CD8-positive, alpha-beta T cell (primary cell): ENCODE measurements at regions of chr12 and their contacts with region 1.

Region 1: GRCh38 chr12:31274520-31275300 is 51.2 kb downstream of the SINHCAF start:
- DNase-seq: no peak
- ATAC-seq: no peak
- H3K4me3 ChIP-seq: no peak overlapping the region
- H3K4me3 Mint-ChIP-seq: no peak overlapping the region
- H3K27ac ChIP-seq: no peak overlapping the region
- H3K27ac Mint-ChIP-seq: peak overlapping the region; percentile 20
- H3K4me1 ChIP-seq: no peaks in the 10 kb centered on the region
- H3K4me1 Mint-ChIP-seq: peaks cover 3% of the 10 kb centered on the region
- H3K27me3 ChIP-seq: no peaks in the 10 kb centered on the region
- H3K27me3 Mint-ChIP-seq: no peaks in the 10 kb centered on the region
- CTCF ChIP-seq: no peak

Region 2: DNA sequence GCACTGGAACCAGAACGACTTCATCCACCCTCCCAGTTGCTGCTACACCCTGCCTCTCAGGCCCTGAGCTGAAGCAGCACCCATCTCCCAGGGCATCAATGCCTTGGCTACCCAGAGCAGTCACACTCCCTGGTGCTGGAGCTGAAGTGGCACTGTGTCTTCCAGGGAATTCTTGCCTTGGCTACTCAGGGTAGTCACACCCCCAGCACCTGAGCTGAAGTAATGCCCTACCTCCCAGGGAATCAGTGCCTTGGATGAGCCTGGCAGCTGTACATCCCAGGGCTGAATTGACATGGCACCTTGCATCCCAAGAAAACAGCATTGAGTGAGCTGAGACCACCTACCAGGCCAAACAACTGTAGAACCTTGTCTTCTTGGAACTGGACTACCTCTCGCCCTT is 389.4 kb before region 1 on chr12:
- CTCF ChIA-PET with region 1: no interaction called
- POLR2A ChIA-PET with region 1: no interaction called
- intact Hi-C with region 1: no loop called
- DNase-seq: no peak
- ATAC-seq: no peak
- H3K4me3 ChIP-seq: no peak overlapping the region
- H3K4me3 Mint-ChIP-seq: no peak overlapping the region
- H3K27ac ChIP-seq: no peak overlapping the region
- H3K27ac Mint-ChIP-seq: no peak overlapping the region
- H3K4me1 ChIP-seq: no peaks in the 10 kb centered on the region
- H3K4me1 Mint-ChIP-seq: no peaks in the 10 kb centered on the region
- H3K27me3 ChIP-seq: no peaks in the 10 kb centered on the region
- H3K27me3 Mint-ChIP-seq: peaks cover 3% of the 10 kb centered on the region
- CTCF ChIP-seq: no peak

Region 3: GRCh38 chr12:30905463-30906009 is 369.2 kb before region 1 on chr12:
- CTCF ChIA-PET with region 1: no interaction called
- POLR2A ChIA-PET with region 1: no interaction called
- intact Hi-C with region 1: no loop called
- DNase-seq: no peak
- ATAC-seq: no peak
- H3K4me3 ChIP-seq: no peak overlapping the region
- H3K4me3 Mint-ChIP-seq: no peak overlapping the region
- H3K27ac ChIP-seq: no peak overlapping the region
- H3K27ac Mint-ChIP-seq: no peak overlapping the region
- H3K4me1 ChIP-seq: no peaks in the 10 kb centered on the region
- H3K4me1 Mint-ChIP-seq: no peaks in the 10 kb centered on the region
- H3K27me3 ChIP-seq: no peaks in the 10 kb centered on the region
- H3K27me3 Mint-ChIP-seq: peaks cover 4% of the 10 kb centered on the region
- CTCF ChIP-seq: no peak

Region 4: GRCh38 chr12:31250179-31250578 is 24.5 kb before region 1 on chr12:
- CTCF ChIA-PET with region 1: interaction called, 20 read pairs
- POLR2A ChIA-PET with region 1: interaction called, 3 read pairs
- intact Hi-C with region 1: no loop called
- DNase-seq: no peak
- ATAC-seq: no peak
- H3K4me3 ChIP-seq: no peak overlapping the region
- H3K4me3 Mint-ChIP-seq: no peak overlapping the region
- H3K27ac ChIP-seq: no peak overlapping the region
- H3K27ac Mint-ChIP-seq: no peak overlapping the region
- H3K4me1 ChIP-seq: no peaks in the 10 kb centered on the region
- H3K4me1 Mint-ChIP-seq: no peaks in the 10 kb centered on the region
- H3K27me3 ChIP-seq: no peaks in the 10 kb centered on the region
- H3K27me3 Mint-ChIP-seq: peaks cover 2% of the 10 kb centered on the region
- CTCF ChIP-seq: no peak

Region 5: DNA sequence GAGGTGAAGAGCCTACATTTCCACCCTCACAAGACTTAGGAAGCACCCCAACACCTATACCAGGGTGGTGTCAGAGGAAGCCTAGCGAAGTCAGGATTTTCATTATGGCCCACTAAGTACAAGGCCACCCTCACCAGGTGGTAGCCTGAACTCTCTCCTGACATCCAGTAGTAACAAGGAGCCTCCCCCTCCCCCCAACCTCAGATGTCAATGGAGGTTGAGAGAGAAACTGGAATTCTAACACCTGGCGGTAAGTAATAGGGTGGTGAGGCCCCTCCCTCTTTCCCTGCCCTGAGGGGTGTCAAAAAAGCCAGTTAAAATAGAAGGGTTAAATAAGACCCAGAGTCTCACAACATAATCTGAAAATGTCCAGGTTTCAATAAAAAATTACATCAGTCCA is 13.7 kb after region 1 on chr12:
- CTCF ChIA-PET with region 1: interaction called, 16 read pairs
- POLR2A ChIA-PET with region 1: interaction called, 3 read pairs
- intact Hi-C with region 1: no loop called
- DNase-seq: no peak
- ATAC-seq: no peak
- H3K4me3 ChIP-seq: no peak overlapping the region
- H3K4me3 Mint-ChIP-seq: no peak overlapping the region
- H3K27ac ChIP-seq: no peak overlapping the region
- H3K27ac Mint-ChIP-seq: peak overlapping the region; percentile 7
- H3K4me1 ChIP-seq: no peaks in the 10 kb centered on the region
- H3K4me1 Mint-ChIP-seq: no peaks in the 10 kb centered on the region
- H3K27me3 ChIP-seq: no peaks in the 10 kb centered on the region
- H3K27me3 Mint-ChIP-seq: no peaks in the 10 kb centered on the region
- CTCF ChIP-seq: no peak

Region 6: DNA sequence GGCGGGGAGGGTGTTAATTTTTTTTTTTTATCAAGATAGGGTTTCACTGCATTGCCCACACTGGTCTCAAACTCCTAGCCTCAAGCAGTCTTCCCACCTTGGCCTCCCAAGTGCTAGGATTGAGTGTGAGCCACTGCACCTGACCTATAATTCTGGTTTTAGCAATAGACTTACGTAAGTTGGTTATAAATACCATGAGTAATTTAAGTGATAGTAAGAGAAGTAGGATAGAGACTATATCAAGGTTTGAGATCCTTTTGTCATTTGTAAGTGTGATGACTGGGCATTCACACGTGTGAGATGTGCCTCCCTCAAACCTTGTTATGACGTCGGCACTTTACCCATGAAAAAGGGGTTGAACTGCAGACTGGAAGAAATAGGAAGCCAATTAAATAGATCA is 28.8 kb after region 1 on chr12:
- CTCF ChIA-PET with region 1: interaction called, 16 read pairs
- POLR2A ChIA-PET with region 1: no interaction called
- intact Hi-C with region 1: no loop called
- DNase-seq: peak in 1 of 9 experiments; percentile 30
- ATAC-seq: no peak
- H3K4me3 ChIP-seq: no peak overlapping the region
- H3K4me3 Mint-ChIP-seq: no peak overlapping the region
- H3K27ac ChIP-seq: no peak overlapping the region
- H3K27ac Mint-ChIP-seq: no peak overlapping the region
- H3K4me1 ChIP-seq: peaks cover under 1% of the 10 kb centered on the region
- H3K4me1 Mint-ChIP-seq: peaks cover 68% of the 10 kb centered on the region
- H3K27me3 ChIP-seq: no peaks in the 10 kb centered on the region
- H3K27me3 Mint-ChIP-seq: no peaks in the 10 kb centered on the region
- CTCF ChIP-seq: no peak

Region 7: DNA sequence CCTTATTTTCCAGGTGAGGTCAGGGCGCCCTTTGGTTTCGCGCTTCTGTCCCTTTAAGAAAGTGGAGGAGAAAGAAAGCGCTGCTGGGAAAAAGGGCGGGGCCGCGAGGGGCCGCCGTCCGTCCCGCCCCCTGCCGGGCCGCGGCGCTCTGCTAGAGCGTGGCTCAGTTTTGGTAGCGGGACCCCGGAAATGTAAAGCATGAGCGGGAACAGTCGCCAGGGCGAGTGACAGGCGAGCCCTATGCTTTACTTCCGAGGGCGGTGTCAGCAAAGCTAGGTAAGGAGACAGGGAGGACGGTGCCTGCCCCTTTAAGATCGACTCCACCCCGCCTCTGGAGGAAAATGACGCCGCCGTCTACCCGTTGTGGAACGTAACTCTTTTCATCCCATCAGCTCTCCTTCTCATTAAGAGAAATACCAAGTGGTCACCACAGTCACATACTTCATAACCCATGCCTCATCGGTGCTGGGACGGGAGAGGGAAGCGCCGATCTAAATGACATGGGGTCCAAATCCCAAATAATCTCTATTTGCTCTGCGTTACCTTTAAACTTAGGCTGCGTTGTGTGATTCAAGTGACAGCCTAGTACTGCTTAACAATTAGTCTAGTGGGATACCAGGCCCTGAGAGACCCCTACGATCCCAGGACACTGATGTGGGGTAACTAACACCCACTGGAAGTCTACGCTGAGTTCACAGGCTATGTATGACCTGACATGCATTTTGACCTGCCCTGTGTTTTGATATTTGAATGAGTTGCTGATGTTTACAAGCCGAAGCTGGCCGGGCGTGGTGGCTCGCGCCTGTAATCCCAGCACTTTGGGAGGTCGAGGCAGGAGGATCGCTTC is 384.6 kb after region 1 on chr12 and contains the start of gene ETFBKMT:
- CTCF ChIA-PET with region 1: no interaction called
- POLR2A ChIA-PET with region 1: no interaction called
- intact Hi-C with region 1: no loop called
- DNase-seq: peak; percentile 84 to 97 (median 92)
- ATAC-seq: peak; percentile 99
- H3K4me3 ChIP-seq: peak within 1 kb of the TSS; percentile 82 to 87
- H3K4me3 Mint-ChIP-seq: peak within 1 kb of the TSS; percentile 98
- H3K27ac ChIP-seq: peak within 1 kb of the TSS; percentile 89 to 92
- H3K27ac Mint-ChIP-seq: peak within 1 kb of the TSS; percentile 100
- H3K4me1 ChIP-seq: peaks cover 11% of the 10 kb centered on the region
- H3K4me1 Mint-ChIP-seq: peaks cover 14% of the 10 kb centered on the region
- H3K27me3 ChIP-seq: no peaks in the 10 kb centered on the region
- H3K27me3 Mint-ChIP-seq: no peaks in the 10 kb centered on the region
- CTCF ChIP-seq: peak; percentile 22
- total RNA-seq, gene ETFBKMT: 0.41 to 1.0 TPM